Breast epithelium (tissue), 4 donors: ENCODE measurements at regions of chr11 and their contacts with region 1.

Region 1: GRCh38 chr11:129117595-129118350 is 74.4 kb downstream of the ARHGAP32 start:
- DNase-seq: no peak
- H3K4me3 ChIP-seq: no peak overlapping the region
- H3K27ac ChIP-seq: no peak overlapping the region
- H3K4me1 ChIP-seq: no peaks in the 10 kb centered on the region
- H3K27me3 ChIP-seq: no peaks in the 10 kb centered on the region
- CTCF ChIP-seq: peak; percentile 43 to 83 (median 83)
- POLR2A ChIP-seq: no peak

Region 2: GRCh38 chr11:129323896-129324512 is 206.2 kb after region 1 on chr11:
- intact Hi-C with region 1: loop called (anchors 10 kb)
- DNase-seq: peak in 1 of 2 donors; percentile 32
- H3K4me3 ChIP-seq: peak overlapping the region; percentile 8 to 43 (median 15)
- H3K27ac ChIP-seq: peak overlapping the region; percentile 57 to 73
- H3K4me1 ChIP-seq: peaks cover 0 to 7% of the 10 kb centered on the region in 2 donors
- H3K27me3 ChIP-seq: no peaks in the 10 kb centered on the region
- CTCF ChIP-seq: no peak
- POLR2A ChIP-seq: no peak

Region 3: DNA sequence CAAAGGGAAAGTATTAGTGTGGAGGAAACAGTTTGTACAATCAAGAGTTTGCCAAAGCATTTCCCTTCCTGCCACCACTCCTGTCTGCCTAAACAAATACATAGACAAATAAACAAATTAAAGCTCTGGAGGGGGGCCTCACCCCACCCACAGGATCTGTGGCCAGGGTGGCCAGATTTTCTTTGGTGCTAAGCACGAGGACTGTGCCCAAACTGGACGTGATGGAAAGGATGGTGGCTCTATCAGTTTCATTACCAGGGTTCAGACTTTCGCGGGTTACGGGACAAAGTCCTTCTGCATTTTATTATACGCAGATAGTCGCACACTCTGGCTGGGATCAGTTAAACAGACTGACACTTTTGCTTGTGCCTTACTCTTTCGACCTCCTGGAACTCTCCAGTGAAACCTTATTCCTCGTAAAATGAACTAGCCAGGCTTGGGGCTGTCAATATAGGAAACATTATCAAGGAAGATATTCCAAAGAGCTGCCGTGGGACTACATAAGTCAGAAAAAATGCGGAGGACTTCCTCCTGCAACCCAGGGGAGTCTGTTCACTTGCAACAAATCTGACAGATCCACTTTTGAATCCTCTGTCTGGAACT is 269.1 kb after region 1 on chr11:
- intact Hi-C with region 1: no loop called
- DNase-seq: no peak
- H3K4me3 ChIP-seq: no peak overlapping the region
- H3K27ac ChIP-seq: no peak overlapping the region
- H3K4me1 ChIP-seq: no peaks in the 10 kb centered on the region
- H3K27me3 ChIP-seq: no peaks in the 10 kb centered on the region
- CTCF ChIP-seq: no peak
- POLR2A ChIP-seq: no peak